ENCODE measurements at regions of chr4 and their contacts with region 1.

Region 1: GRCh38 chr4:147960971-147961370 is 229.1 kb downstream of the ARHGAP10 start:
- DNase-seq: no peak
- H3K4me3 ChIP-seq: no peak overlapping the region
- H3K27ac ChIP-seq: no peak overlapping the region
- H3K4me1 ChIP-seq: peaks cover 0 to 4% of the 10 kb centered on the region in 2 donors
- H3K27me3 ChIP-seq: no peaks in the 10 kb centered on the region
- CTCF ChIP-seq: no peak
- POLR2A ChIP-seq: no peak

Region 2: DNA sequence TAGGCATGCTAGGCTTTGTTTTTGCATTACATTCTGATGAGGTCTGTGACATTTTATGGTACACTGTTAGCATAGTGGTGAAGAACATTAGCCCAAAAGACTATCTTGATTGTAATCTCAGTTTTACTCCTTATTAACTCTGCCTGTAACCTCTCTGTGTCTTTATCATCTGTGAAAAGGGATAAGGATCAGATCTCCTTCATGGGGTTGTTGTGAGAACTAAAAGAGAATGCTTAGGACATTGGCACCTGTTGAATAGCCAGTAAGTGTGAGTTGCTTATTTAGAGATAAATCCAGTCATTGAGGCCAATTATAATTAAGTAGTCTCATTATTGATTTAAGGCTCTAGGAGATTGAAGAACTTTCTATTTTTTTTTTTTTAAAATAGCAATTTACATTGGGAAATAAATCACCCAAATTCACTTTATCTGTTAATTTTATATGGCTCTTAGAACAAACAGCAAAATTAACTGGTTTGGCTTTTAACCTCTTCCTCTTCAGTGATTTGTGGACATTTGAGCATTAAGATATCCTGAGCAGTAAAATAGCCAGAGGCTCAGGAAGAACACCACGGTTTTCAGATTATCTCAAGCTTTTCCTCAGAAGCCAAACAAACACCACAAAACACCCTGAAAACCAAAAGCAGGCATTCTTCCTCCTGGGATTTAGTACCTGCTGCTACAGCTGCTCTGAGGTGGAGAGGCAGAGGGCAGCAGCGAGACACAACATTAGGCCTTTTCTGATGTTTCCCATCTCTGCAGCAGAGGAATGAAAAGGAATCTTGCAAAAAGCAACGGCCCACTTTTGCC is 36.2 kb before region 1 on chr4:
- intact Hi-C with region 1: no loop called
- DNase-seq: no peak
- H3K4me3 ChIP-seq: no peak overlapping the region
- H3K27ac ChIP-seq: no peak overlapping the region
- H3K4me1 ChIP-seq: no peaks in the 10 kb centered on the region
- H3K27me3 ChIP-seq: no peaks in the 10 kb centered on the region
- CTCF ChIP-seq: peak in 1 of 3 donors; percentile 13
- POLR2A ChIP-seq: no peak

Region 3: GRCh38 chr4:147943159-147943638 is 17.8 kb before region 1 on chr4:
- intact Hi-C with region 1: no loop called
- DNase-seq: no peak
- H3K4me3 ChIP-seq: no peak overlapping the region
- H3K27ac ChIP-seq: no peak overlapping the region
- H3K4me1 ChIP-seq: no peaks in the 10 kb centered on the region
- H3K27me3 ChIP-seq: no peaks in the 10 kb centered on the region
- CTCF ChIP-seq: no peak
- POLR2A ChIP-seq: no peak

Region 4: GRCh38 chr4:148664636-148665035 is 703.7 kb after region 1 on chr4:
- intact Hi-C with region 1: no loop called
- DNase-seq: no peak
- H3K4me3 ChIP-seq: no peak overlapping the region
- H3K27ac ChIP-seq: no peak overlapping the region
- H3K4me1 ChIP-seq: no peaks in the 10 kb centered on the region
- H3K27me3 ChIP-seq: no peaks in the 10 kb centered on the region
- CTCF ChIP-seq: no peak
- POLR2A ChIP-seq: no peak

Region 5: DNA sequence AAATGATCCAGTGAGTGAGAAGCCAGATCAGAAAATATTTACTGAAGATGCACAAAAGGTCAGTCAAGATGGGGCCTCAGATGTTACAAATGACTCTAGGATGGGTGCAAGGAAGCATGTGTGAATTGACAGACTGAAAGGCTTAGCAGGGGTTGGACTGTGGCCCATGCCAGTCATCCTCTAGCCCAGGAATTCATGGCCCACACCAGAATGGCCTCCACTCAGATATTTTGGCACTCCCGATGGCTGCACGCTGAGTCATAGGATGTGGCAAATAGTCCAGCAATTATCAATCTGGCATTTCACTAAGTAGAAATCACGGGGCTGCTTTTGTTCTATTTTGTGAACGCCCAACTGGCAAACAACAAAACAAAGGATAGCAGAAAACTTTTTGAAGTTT is 1448.2 kb after region 1 on chr4:
- intact Hi-C with region 1: loop called (anchors 5 kb)
- DNase-seq: peak in 1 of 2 donors; percentile 30
- H3K4me3 ChIP-seq: no peak overlapping the region
- H3K27ac ChIP-seq: no peak overlapping the region
- H3K4me1 ChIP-seq: no peaks in the 10 kb centered on the region
- H3K27me3 ChIP-seq: no peaks in the 10 kb centered on the region
- CTCF ChIP-seq: no peak
- POLR2A ChIP-seq: no peak